Left cardiac atrium (tissue), 4 donors: ENCODE measurements at regions of chr10 and their contacts with region 1.

Region 1: DNA sequence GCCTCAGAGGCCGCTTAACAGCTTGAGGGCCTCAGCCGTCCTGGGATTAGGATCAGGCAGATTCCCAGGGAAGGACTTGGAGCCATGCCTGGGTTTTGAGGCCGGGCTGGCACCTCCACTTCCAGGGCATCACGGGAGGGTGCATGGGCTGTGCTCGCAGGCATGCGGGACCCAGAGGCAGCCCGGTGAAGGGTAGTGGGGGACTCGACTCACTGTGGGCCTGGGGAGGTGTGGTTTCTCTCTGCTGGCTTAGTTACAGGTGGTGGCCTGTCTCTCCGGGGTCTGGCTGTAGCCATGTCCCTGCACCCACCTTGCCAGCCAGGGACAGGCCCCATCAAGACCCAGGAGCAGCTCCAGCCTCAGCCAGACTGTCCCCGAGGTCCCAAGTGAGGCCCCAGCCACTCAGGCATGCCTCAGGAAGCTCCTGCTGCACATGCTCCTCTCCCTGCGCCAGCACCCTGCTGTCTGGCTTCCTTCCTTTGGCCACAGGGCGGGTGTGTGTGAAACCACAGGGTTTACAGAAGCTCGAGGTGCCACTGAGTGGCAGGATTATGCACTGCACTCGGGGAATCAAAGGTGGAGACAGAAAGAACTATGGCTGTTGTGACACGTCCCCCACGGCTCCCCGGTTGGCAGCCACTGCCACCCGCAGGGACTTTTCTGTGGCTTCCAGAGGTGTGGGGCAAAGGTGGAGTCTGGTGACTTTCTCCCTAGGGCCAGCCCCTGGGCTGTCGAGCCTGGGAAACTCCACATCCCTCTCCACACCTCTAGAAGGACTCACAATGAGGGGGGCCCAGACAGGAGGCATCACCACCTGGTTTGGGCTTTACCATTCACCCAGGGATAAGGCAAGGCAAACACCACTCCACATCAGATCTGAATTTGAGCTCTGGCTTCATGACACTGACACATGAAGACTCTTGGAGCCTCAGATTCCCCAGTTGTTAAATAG is 19.7 kb downstream of the GOLGA7B start:
- DNase-seq: peak; percentile 89
- ATAC-seq: peak; percentile 94 to 96

Region 2: DNA sequence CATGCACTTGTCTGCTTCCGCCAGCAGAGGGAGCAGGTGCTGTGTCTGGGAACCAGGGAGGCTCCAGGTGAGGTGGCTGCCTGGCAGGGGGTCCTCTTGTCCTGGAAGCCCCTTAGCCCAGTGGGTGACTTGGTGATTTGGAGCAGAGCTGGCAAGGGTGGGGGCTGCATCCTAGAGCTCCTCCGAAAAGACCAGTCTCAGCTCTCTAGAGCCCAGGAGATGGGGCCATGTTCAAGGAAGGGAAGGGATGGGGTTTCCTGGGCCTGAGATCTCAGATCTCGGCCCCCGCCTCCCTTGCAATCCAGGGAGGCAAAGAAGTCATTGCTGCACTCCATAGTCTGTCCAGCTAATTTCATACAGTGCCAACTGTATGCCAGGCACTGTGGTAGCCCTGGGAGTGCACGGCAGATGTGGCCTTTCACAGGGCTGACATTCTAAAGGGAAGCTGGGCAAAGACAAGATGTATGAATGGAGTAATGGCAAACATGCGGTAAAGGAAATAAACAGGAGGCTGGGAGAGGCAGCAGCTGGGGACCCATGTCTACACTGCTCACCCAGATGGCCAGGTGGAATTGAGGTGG is 77.1 kb before region 1 on chr10:
- intact Hi-C with region 1: loop called (anchors 2 to 5 kb)
- DNase-seq: peak; percentile 68
- ATAC-seq: peak; percentile 25 to 45

Region 3: DNA sequence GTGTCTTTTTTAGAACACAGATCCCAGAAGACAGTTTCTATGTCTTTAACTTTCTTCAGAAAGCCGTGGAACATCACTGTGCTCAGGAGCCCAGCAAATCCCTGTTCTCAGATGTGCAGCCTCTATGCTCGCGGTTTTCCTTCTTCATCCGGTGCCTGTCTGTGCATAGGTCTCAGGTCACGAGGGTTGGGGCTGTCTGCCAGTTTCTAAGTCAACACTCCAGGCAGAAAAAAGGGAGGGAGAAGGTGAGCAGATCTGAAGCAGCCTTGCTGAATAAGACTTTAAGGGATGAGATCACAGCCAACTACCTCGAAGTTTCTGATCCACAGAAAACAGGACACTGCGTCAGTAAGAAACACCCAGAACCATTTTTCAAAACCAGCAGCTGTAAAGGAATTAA is 92.6 kb after region 1 on chr10:
- intact Hi-C with region 1: no loop called
- DNase-seq: no peak
- ATAC-seq: no peak